GM10248 (cell line): ENCODE measurements at regions of chr12 and their contacts with region 1.

Region 1: DNA sequence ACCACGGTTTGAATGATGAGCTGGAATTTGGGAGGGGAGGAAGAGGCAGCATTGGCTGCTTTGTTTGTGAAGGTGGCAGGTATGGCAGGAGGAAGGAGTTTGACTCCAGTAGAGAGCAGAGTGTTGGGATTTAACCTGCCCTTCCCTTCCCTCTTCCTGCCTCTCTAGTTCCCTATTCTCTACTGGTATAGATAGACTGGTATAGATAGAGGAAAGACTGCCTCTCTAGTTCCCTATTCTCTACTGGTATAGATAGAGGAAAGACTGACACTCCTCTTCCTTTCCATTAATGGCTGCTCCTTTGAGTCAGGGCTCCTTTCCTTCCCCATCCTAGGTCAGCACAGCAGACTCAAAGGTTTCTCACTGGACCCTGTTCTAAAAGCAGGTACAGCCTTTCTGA is 8.4 kb upstream of the SYCP3 start:
- DNase-seq: no peak
- CTCF ChIP-seq: no peak

Region 2: DNA sequence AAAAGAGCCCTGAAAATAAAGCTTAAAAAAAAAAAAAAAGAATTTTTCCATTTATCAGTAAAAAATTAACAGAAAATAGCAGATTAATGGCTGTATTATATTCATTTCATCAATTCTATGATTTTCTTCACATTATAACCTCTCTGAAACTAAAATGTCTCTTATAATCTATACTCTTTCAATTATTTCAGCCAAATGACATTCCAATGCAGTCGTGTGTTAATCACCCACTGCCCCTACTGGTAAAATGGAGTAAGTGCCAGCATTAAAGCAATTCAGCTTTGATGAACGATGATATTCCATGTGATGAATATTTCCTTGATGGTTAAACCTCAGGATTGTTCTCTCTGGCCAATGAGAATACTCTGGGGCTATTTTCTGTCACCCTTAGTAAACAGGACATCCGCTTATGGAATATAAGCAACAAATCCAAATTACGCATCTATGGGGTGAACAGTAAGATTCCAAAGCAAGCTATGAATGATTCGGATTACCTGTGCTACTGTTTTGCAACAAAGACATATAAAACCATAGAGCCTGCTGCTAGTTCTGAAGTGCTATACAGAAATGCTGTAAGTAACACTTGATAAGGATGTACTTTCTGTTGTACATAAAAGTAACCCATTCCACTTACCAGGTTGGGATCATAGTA is 11.8 kb after region 1 on chr12:
- CTCF ChIA-PET with region 1: interaction called, 18 read pairs
- POLR2A ChIA-PET with region 1: no interaction called
- DNase-seq: peak; percentile 44
- CTCF ChIP-seq: peak; percentile 71

Region 3: DNA sequence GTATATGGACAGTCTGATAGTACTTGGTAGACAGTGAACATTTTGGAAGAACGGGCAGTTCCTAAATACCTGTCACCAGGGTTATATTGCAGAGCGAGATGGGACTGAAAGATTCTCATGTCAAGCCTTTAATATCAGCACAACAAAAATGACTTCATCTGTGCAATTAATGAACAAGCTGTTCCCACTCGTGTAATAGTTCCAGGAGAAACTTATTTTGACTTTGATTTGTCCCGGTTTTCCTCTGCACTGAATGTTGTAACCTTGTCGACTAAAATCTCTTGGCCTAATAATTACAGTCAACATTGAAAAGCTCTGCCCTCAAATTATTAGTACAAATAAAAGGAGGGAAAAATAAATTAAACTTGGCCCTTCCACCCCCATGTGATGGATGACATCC is 234.6 kb after region 1 on chr12:
- CTCF ChIA-PET with region 1: no interaction called
- POLR2A ChIA-PET with region 1: no interaction called
- DNase-seq: no peak
- CTCF ChIP-seq: no peak